ENCODE measurements at regions of chr6 and their contacts with region 1.

Region 1: DNA sequence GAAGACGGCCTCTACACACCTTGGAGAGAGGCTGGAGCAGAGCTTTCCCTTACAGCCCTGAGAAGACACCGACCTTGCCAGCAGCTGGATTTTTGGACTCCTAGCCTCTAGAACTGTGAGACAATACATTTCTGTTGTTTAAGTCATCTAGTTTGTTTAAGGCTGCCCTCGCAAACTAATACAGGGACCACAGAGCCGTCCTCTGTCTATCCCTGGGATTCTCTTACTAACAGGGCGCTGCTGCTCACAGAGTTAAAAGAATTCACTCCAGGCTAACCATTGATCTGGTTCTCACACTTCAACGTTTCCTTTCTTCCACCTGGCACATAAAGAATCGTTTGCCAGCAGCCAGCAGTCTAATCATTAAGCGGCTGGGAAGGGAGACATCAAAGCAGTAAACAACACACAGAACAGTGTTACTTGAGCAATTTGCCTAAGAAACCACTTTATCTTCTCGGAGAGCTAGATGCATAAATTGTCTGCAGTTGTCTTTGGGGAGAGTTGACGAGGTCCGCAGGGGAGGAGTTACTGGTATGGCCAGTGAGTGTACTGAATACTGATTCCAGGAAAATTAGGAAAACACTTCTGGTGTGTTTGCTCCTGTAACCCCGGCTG is 103.5 kb upstream of the AKAP12 start:
- DNase-seq: no peak
- ATAC-seq: no peak

Region 2: GRCh38 chr6:151216804-151217203 is 80.6 kb after region 1 on chr6:
- intact Hi-C with region 1: loop called in 1 of 2 experiments (anchors 10 kb)
- DNase-seq: no peak
- ATAC-seq: no peak

Region 3: GRCh38 chr6:151257985-151258445 is 121.8 kb after region 1 on chr6:
- intact Hi-C with region 1: no loop called
- DNase-seq: no peak
- ATAC-seq: no peak

Region 4: GRCh38 chr6:151285122-151285521 is 148.9 kb after region 1 on chr6:
- intact Hi-C with region 1: no loop called
- DNase-seq: no peak
- ATAC-seq: no peak

Measured in left colon (tissue), 2 donors.